CD4-positive, alpha-beta T cell (primary cell): ENCODE measurements at regions of chr10 and their contacts with region 1.

Region 1: DNA sequence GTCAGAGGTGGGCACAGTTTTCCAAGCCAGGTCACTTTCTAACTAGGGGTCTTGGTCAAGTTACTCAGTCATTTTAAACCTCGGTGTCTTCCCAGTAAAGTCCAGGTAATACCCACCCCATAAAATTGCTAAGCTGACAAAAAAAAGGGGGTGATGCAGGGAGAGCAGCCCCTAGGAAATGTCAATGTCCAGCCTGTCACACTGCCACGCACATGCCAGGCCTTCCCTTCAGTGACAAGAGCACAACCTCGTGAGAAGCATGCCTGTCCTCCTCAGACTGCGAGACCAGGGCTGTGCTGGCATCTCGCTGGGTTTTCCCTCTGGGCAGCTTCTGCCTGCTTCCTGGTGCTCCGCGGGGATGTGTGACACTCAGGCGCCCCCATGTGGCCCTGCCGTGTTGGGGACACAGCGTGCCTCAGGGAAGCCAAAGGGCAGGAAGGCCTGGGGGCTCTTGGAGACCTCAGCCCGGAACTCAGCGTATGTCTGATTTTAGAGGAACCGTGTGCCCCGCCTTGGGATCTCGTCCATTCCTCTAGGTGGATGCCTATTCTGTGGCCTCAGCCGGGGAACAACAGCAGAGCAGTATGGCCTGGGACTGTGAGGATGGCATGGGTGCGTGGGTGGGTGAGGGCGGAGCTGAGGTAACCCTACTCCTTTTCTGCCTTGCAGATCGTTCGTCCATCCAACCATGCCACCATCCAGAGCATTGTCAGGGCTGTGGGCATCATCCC is 10.2 kb upstream of the GDF2 start:
- DNase-seq: peak; percentile 75 to 92 (median 81)
- ATAC-seq: peak; percentile 77
- H3K4me3 ChIP-seq: peak overlapping the region; percentile 0
- H3K4me3 Mint-ChIP-seq: peak overlapping the region; percentile 56
- H3K27ac ChIP-seq: peak overlapping the region in 1 of 2 donors; percentile 39
- H3K27ac Mint-ChIP-seq: peak overlapping the region; percentile 88
- H3K4me1 ChIP-seq: peaks cover 44% of the 10 kb centered on the region
- H3K4me1 Mint-ChIP-seq: peaks cover 33% of the 10 kb centered on the region
- H3K27me3 ChIP-seq: no peaks in the 10 kb centered on the region
- H3K27me3 Mint-ChIP-seq: no peaks in the 10 kb centered on the region
- CTCF ChIP-seq: peak; percentile 90

Region 2: GRCh38 chr10:47024399-47025252 is 287.5 kb before region 1 on chr10:
- CTCF ChIA-PET with region 1: interaction called, 29 read pairs
- POLR2A ChIA-PET with region 1: interaction called, 12 read pairs
- intact Hi-C with region 1: loop called (anchors 1 kb)
- DNase-seq: peak; percentile 53 to 82 (median 64)
- ATAC-seq: peak; percentile 80
- H3K4me3 ChIP-seq: no peak overlapping the region
- H3K4me3 Mint-ChIP-seq: no peak overlapping the region
- H3K27ac ChIP-seq: no peak overlapping the region
- H3K27ac Mint-ChIP-seq: no peak overlapping the region
- H3K4me1 ChIP-seq: peaks cover 7% of the 10 kb centered on the region
- H3K4me1 Mint-ChIP-seq: peaks cover 6% of the 10 kb centered on the region
- H3K27me3 ChIP-seq: no peaks in the 10 kb centered on the region
- H3K27me3 Mint-ChIP-seq: no peaks in the 10 kb centered on the region
- CTCF ChIP-seq: peak; percentile 86

Region 3: DNA sequence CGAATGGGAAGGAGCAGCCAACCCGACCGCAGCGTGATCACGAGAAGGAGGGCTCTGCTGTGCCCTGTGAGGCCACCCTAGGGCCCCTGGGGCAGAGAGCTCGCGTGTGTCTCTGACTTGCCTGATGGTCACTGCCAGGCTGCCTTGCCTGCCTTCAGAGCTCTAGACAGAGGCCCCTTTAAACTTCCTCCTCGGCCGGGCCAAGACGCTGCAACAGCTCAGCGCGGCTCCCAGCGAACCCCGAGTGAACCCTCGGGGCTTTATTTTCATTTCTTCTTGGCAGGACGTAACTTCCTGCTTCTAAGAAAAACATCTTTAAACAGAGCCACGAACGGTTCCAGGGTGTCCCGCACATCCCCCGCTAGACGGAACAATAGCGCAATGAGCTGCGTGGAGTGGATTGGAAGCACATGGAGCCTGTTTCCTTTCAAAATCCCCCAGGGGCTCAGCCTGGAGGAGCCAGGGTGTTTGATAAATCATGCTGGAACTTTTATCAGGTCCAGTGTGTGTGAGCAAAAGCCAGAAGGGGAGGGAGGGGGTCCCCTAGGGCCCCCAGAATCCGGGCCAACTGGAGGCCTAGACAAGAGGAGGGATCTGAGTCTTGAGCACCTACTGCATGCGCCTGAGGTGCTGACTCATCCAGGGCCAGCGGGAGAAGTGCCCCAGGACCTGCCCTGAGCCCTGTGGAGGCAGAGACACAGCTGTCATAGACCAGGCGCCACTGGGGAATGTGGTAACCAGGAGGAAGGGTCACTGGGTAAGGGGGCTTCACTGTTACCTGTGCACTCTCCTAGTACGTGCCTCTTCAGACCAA is 146.2 kb before region 1 on chr10:
- CTCF ChIA-PET with region 1: no interaction called
- POLR2A ChIA-PET with region 1: interaction called, 24 read pairs
- intact Hi-C with region 1: loop called (anchors 2 to 5 kb)
- DNase-seq: peak; percentile 31 to 76 (median 46)
- ATAC-seq: peak; percentile 87
- H3K4me3 ChIP-seq: peak overlapping the region; percentile 61
- H3K4me3 Mint-ChIP-seq: peak overlapping the region; percentile 86
- H3K27ac ChIP-seq: peak overlapping the region; percentile 59 to 79
- H3K27ac Mint-ChIP-seq: peak overlapping the region; percentile 96
- H3K4me1 ChIP-seq: peaks cover 31% of the 10 kb centered on the region
- H3K4me1 Mint-ChIP-seq: peaks cover 38% of the 10 kb centered on the region
- H3K27me3 ChIP-seq: no peaks in the 10 kb centered on the region
- H3K27me3 Mint-ChIP-seq: no peaks in the 10 kb centered on the region
- CTCF ChIP-seq: no peak

Region 4: GRCh38 chr10:47261121-47261520 is 51.0 kb before region 1 on chr10:
- CTCF ChIA-PET with region 1: interaction called, 7 read pairs
- POLR2A ChIA-PET with region 1: interaction called, 9 read pairs
- intact Hi-C with region 1: loop called in 1 of 2 experiments (anchors 1 kb)
- DNase-seq: peak in 13 of 14 experiments; percentile 18 to 73 (median 44)
- ATAC-seq: peak; percentile 61
- H3K4me3 ChIP-seq: no peak overlapping the region
- H3K4me3 Mint-ChIP-seq: peak overlapping the region; percentile 11
- H3K27ac ChIP-seq: peak overlapping the region; percentile 44 to 77
- H3K27ac Mint-ChIP-seq: peak overlapping the region; percentile 93
- H3K4me1 ChIP-seq: peaks cover 75% of the 10 kb centered on the region
- H3K4me1 Mint-ChIP-seq: peaks cover 96% of the 10 kb centered on the region
- H3K27me3 ChIP-seq: no peaks in the 10 kb centered on the region
- H3K27me3 Mint-ChIP-seq: no peaks in the 10 kb centered on the region
- CTCF ChIP-seq: no peak

Region 5: DNA sequence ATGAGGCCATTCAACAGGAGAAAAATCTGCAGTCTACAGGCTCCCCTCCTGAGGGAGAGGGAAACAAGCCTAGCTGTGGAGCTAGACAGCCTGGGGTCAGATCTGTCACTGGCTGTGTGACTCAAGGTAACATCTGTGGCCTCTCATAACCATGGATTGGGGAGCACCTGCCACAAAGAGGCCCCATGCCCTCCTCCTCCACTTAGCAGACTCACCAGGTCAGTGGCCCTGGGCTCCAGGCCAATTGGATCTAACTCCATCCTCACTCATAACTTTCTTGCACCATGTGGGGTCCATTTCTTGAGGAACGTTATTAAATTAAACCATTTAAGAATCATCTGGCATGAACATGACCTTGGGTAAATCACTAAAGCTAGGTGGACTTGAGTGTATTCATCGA is 10.3 kb before region 1 on chr10:
- CTCF ChIA-PET with region 1: no interaction called
- POLR2A ChIA-PET with region 1: interaction called, 4 read pairs
- intact Hi-C with region 1: loop called in 1 of 2 experiments (anchors 1 kb)
- DNase-seq: no peak
- ATAC-seq: no peak
- H3K4me3 ChIP-seq: no peak overlapping the region
- H3K4me3 Mint-ChIP-seq: peak overlapping the region; percentile 85
- H3K27ac ChIP-seq: no peak overlapping the region
- H3K27ac Mint-ChIP-seq: no peak overlapping the region
- H3K4me1 ChIP-seq: peaks cover 36% of the 10 kb centered on the region
- H3K4me1 Mint-ChIP-seq: peaks cover 50% of the 10 kb centered on the region
- H3K27me3 ChIP-seq: peaks cover 4% of the 10 kb centered on the region in 2 experiments
- H3K27me3 Mint-ChIP-seq: peaks cover 12% of the 10 kb centered on the region
- CTCF ChIP-seq: no peak